Gastrocnemius medialis (tissue), 4 donors: ENCODE measurements at regions of chr17 and their contacts with region 1.

Region 1: GRCh38 chr17:35063514-35064223 is at the start of gene RFFL:
- DNase-seq: peak; percentile 93 to 95
- ATAC-seq: peak; percentile 99 to 100
- H3K4me3 ChIP-seq: peak within 1 kb of the TSS; percentile 47 to 57 (median 54)
- H3K27ac ChIP-seq: peak within 1 kb of the TSS; percentile 87 to 97 (median 90)
- H3K4me1 ChIP-seq: peaks cover 13 to 30% of the 10 kb centered on the region in 2 donors
- H3K27me3 ChIP-seq: no peaks in the 10 kb centered on the region
- CTCF ChIP-seq: peak in 1 of 5 experiments; percentile 13
- POLR2A ChIP-seq: peak; percentile 59 to 75
- total RNA-seq, gene RFFL: 17.4 to 65.7 (median 35.0) TPM

Region 2: GRCh38 chr17:34961093-34961911 is 102.4 kb before region 1 on chr17 and contains the starts of genes CCT6B and ZNF830:
- in situ Hi-C with region 1: no loop called
- intact Hi-C with region 1: loop called (anchors 2 kb)
- DNase-seq: peak; percentile 86 to 89
- ATAC-seq: peak; percentile 99 to 100
- H3K4me3 ChIP-seq: peak within 1 kb of the TSS; percentile 77 to 97 (median 92)
- H3K27ac ChIP-seq: peak within 1 kb of the TSS; percentile 90 to 98 (median 93)
- H3K4me1 ChIP-seq: peaks cover 23 to 26% of the 10 kb centered on the region in 2 donors
- H3K27me3 ChIP-seq: no peaks in the 10 kb centered on the region
- CTCF ChIP-seq: no peak
- POLR2A ChIP-seq: peak; percentile 51 to 60
- total RNA-seq, gene CCT6B: 1.4 to 5.4 (median 2.8) TPM
- total RNA-seq, gene ZNF830: 6.0 to 11.0 (median 7.2) TPM

Region 3: DNA sequence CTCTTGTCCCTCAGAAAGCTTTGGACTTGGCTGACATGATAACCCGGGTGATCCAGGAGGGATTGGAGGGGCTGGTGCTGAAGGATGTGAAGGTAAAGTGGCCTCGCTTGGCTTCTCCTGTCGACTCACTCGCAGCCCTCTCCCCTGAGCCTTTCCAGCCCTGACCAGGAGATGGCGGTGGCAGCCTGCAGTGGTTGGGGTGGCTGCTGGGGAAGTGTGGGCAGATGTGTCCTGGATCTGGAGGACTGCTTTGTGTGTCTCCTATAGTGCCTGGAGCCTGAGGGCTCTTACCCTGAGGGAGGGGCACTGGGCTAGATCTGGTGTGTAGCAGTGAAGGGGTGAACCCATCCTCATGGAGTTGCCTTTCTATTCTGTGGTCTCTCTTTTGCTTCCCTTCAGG is 65.5 kb before region 1 on chr17:
- in situ Hi-C with region 1: no loop called
- intact Hi-C with region 1: loop called (anchors 1 kb)
- DNase-seq: peak; percentile 38 to 64
- ATAC-seq: peak; percentile 65 to 89
- H3K4me3 ChIP-seq: no peak overlapping the region
- H3K27ac ChIP-seq: peak overlapping the region in 1 of 4 donors; percentile 34
- H3K4me1 ChIP-seq: peaks cover 6 to 9% of the 10 kb centered on the region in 2 donors
- H3K27me3 ChIP-seq: no peaks in the 10 kb centered on the region
- CTCF ChIP-seq: peak; percentile 59 to 83 (median 72)
- POLR2A ChIP-seq: no peak

Region 4: GRCh38 chr17:35011671-35012210 is 51.9 kb before region 1 on chr17:
- in situ Hi-C with region 1: no loop called
- intact Hi-C with region 1: loop called (anchors 5 kb)
- DNase-seq: peak; percentile 63 to 87
- ATAC-seq: peak; percentile 98 to 99
- H3K4me3 ChIP-seq: no peak overlapping the region
- H3K27ac ChIP-seq: peak overlapping the region; percentile 42 to 66 (median 52)
- H3K4me1 ChIP-seq: peaks cover 12 to 17% of the 10 kb centered on the region in 2 donors
- H3K27me3 ChIP-seq: no peaks in the 10 kb centered on the region
- CTCF ChIP-seq: no peak
- POLR2A ChIP-seq: no peak

Region 5: DNA sequence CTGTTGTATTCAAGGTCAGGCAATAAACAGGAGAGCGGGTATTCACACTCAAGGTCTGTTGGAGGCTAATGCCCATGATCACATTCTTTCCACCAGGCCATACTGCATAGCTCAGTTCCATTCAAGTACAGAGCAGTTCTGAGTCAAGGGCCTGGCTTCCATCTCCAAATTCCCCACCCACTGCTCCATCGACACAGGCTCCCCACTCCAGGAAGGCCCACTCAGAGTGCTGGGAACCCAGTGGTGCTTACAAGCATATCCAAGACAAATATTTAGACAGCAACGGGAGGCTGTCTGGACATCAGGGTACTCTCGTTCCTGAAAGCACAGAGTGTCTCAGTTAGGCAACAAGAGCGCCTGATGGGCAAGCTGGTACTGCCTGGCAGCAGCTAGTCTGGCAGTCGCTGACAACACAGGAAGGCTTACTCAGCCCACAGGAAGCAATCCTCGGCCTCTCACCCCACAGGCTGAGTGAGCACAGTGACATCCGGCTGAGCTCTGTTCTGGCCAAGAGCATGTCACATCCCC is 41.1 kb before region 1 on chr17:
- in situ Hi-C with region 1: no loop called
- intact Hi-C with region 1: no loop called
- DNase-seq: peak; percentile 45 to 78
- ATAC-seq: peak; percentile 92 to 93
- H3K4me3 ChIP-seq: no peak overlapping the region
- H3K27ac ChIP-seq: peak overlapping the region; percentile 69 to 80 (median 74)
- H3K4me1 ChIP-seq: peaks cover 9 to 19% of the 10 kb centered on the region in 2 donors
- H3K27me3 ChIP-seq: no peaks in the 10 kb centered on the region
- CTCF ChIP-seq: no peak
- POLR2A ChIP-seq: peak in 1 of 2 donors; percentile 19

Region 6: GRCh38 chr17:35088881-35089585 is 25.4 kb after region 1 on chr17:
- in situ Hi-C with region 1: no loop called
- intact Hi-C with region 1: loop called (anchors 1 kb)
- DNase-seq: peak; percentile 60 to 79
- ATAC-seq: peak; percentile 88 to 93
- H3K4me3 ChIP-seq: peak overlapping the region; percentile 66 to 100 (median 82)
- H3K27ac ChIP-seq: peak overlapping the region; percentile 56 to 77 (median 74)
- H3K4me1 ChIP-seq: peaks cover 6 to 14% of the 10 kb centered on the region in 2 donors
- H3K27me3 ChIP-seq: no peaks in the 10 kb centered on the region
- CTCF ChIP-seq: peak; percentile 70 to 93 (median 86)
- POLR2A ChIP-seq: peak; percentile 33 to 36